ENCODE measurements at regions of chr3 and their contacts with region 1.

Region 1: DNA sequence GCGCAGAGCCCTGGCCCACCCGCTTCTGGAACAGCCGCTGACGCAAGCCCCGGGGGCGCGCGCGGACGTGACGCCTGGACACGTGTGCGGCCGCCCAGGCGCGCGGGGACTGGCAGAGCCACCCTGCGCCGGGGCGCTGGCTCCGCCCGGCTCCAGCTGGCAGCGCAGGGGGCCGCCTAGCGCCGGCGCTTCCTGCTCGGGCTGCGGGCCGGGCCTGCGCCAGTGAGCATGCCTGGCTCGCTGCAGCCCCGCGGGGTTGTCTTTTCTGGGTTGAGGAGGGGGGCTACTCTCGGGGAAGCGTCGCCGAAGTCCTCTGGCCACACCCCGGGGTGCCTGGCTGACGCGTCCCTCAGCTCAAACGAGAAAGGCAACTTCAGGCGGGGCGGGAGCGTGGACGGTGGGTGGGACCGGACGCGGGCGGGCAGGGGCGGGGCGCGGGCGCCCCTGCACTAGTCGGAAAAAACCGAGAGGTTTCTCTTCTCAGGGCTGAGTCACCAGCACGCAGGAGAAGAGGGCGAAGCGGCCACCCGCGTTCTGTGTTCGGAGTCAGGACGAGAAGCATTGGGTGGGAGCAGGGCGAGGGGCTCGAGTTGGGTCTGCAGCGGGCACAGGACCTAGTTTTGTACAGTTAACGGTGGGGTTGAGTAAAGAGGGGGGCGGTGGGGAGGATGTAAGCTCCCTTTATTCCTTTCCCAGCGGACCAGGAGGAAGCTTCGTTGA is at the start of gene SIAH2:
- DNase-seq: peak; percentile 85
- H3K4me3 ChIP-seq: peak within 1 kb of the TSS; percentile 95
- H3K27ac ChIP-seq: peak within 1 kb of the TSS; percentile 97
- H3K27me3 ChIP-seq: no peaks in the 10 kb centered on the region
- CTCF ChIP-seq: no peak
- polyA plus RNA-seq, gene SIAH2: 31.1 and 36.2 TPM in 2 replicates

Region 2: DNA sequence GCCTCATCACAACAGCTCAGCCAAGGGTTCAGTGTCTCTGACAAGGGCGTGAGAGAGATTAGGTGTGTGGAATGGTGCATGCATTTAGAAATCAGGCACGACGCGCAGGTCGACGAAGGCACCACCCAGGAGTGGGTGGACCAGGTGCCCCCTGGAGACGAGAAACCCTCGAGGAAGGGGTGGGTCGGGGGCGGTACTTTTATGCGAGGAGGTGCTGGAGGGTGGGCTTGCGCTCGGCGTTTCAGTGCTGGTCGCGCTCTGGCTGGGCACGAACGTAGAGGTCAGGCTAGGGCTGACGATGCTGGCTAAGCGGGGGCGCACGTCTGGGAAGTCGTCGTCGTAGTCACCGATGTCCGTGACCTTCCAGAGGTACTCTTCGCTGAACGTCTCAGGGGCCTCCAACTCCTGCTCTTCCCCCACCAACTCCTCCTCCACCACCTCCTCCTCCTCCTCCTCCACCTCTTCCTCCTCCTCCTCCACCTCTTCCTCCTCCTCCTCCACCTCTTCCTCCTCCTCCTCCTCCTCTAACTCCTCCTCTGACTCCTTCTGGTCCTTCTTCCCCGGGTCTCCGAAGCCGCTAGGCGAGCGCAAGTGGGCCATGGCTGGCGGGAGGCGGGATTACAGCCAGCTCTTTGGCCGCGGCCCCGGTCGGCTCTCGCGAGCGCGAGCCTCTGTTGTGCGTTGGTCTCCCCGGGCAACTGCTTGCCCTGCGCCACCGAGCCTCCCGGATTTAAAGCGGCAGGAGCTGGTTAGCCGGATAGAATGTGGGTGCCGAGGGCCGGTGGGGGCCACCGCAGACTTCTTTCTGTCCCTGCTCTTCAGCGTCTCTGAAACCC is 59.8 kb before region 1 on chr3 and contains the start of gene ERICH6:
- CTCF ChIA-PET with region 1: no interaction called
- POLR2A ChIA-PET with region 1: interaction called, 17 read pairs
- DNase-seq: peak; percentile 72
- H3K4me3 ChIP-seq: peak within 1 kb of the TSS; percentile 79
- H3K27ac ChIP-seq: peak within 1 kb of the TSS; percentile 11
- H3K27me3 ChIP-seq: no peaks in the 10 kb centered on the region
- CTCF ChIP-seq: peak; percentile 12; the same call in 1 of the 2 replicates
- polyA plus RNA-seq, gene ERICH6: not detected in 2 replicates

Region 3: DNA sequence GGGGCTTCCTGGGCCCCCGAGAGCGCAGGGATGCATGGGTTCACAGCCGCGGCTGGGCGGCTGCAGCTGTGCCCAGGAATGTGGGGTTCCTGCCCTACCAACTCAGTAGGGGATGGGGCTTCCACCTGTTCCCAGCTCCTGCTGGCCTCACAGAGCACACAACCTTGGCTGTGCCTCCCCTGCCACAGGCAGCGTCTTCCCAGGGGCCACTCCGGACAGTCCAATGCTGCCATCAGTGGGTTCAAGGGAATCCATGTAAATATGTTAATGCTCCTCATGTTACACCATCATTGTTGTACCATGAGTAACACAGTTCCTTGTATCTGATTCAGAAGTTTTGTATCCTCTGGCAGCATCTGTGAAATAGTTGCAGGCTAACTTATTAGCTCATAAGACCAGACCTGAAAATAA is 11.8 kb after region 1 on chr3:
- CTCF ChIA-PET with region 1: interaction called, 6 read pairs
- POLR2A ChIA-PET with region 1: interaction called, 10 read pairs
- DNase-seq: peak; percentile 43
- H3K4me3 ChIP-seq: no peak overlapping the region
- H3K27ac ChIP-seq: no peak overlapping the region
- H3K27me3 ChIP-seq: no peaks in the 10 kb centered on the region
- CTCF ChIP-seq: no peak

Region 4: DNA sequence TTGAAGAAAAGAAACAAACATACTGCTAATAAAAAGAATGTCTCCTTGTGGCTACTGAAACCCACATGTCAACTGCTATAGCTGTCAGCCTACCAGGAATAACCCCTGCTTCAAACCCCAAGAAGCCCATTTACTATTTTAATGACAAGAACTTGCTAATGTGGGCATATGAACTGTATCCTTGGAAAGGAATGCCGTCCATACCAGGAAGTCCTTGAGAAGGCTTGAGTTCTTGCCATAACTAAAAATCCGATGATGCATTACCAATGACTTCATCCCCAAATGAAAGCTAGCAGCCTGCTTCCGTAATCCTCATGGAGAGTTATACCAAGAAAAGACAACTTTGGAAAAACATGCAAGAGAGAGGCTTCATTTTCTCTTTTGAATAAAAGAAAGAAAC is 107.1 kb after region 1 on chr3:
- CTCF ChIA-PET with region 1: interaction called, 14 read pairs
- POLR2A ChIA-PET with region 1: no interaction called
- DNase-seq: no peak
- H3K4me3 ChIP-seq: no peak overlapping the region
- H3K27ac ChIP-seq: no peak overlapping the region
- H3K27me3 ChIP-seq: peaks cover 4% of the 10 kb centered on the region
- CTCF ChIP-seq: no peak

Measured in AG04450 (cell line).